PC-3 (cell line): ENCODE measurements at regions of chr5 and their contacts with region 1.

Region 1: DNA sequence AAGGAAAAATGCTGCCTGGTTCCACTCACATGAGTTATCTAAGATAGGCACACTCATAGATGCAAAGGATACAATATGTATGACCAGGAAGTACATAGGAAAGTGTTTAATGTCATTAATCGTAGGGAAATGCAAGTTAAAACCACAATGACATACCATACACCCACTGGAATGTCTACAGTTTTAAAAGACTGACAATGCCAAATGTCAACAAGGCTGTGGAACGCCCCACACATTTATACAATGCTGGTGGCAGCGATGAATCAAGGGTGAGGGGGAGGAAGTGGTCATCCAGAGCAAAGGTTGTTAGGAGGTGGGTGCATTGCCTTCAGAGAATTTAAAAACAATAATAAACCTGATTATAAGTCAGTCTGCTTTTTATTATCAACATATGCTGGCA is 437.8 kb downstream of the ARHGEF28 start:
- DNase-seq: peak; percentile 90
- ATAC-seq: peak; percentile 95
- H3K4me3 ChIP-seq: no peak overlapping the region
- H3K27ac ChIP-seq: peak overlapping the region; percentile 55
- H3K4me1 ChIP-seq: peaks cover 45% of the 10 kb centered on the region
- H3K27me3 ChIP-seq: no peaks in the 10 kb centered on the region
- CTCF ChIP-seq: no peak

Region 2: DNA sequence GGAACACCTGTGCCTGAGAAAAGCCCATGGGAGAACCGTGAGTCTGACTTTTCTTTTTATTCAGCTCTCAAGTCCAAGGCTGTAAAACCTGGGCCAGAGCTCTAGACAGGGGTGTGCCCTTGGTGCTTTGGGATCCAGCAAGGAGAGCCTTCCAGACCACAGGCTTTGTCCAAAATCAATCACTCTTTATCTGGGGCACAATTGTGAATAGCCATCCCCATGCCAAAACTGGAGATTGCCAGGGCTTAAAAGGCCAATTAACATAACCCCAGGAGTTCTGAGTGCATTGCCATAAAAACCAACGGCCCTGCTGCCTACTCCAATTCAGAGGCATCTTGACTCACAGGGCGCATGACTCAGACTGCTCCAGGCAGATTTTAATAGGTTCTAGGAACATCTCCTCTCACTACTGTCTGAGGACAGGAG is 46.0 kb before region 1 on chr5:
- CTCF ChIA-PET with region 1: no interaction called
- POLR2A ChIA-PET with region 1: no interaction called
- intact Hi-C with region 1: loop called (anchors 5 kb)
- DNase-seq: peak; percentile 82
- ATAC-seq: peak; percentile 94
- H3K4me3 ChIP-seq: no peak overlapping the region
- H3K27ac ChIP-seq: peak overlapping the region; percentile 96
- H3K4me1 ChIP-seq: peaks cover 26% of the 10 kb centered on the region
- H3K27me3 ChIP-seq: no peaks in the 10 kb centered on the region
- CTCF ChIP-seq: no peak

Region 3: DNA sequence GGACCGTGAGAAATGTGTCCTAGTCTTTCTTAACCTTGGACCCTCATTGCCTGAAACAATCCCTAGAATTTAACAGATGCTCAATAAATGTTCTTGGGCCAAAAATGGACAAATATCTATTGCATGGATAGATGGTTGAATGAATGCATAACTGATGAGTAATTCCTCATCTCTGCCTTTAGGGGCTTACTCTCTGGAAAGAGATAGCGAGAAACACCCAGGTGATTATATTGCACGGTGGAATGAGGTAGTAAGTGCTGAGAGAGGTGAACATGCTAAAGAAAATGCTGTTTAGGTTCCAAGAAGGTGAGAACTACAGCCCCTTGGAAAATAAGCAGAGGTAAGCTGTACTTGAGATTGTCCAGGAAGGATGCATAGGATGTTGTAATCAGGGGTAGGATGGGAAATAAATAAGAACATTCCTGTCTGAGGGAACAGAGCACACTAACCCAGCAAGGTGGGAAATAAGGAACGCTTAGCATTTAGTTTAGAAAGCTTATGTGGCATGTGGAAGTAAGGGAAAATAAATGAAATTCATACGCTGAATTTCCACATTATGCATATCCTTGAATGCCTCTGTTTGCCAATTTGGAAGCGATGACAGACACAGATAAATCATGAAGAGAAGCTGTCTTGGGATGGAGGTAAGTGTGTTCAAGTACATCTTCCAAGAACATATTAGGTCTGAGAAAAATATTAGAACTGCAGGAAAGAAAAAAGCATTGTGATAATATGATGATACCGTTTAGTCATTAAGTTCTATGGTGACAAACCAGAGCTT is 11.2 kb before region 1 on chr5:
- CTCF ChIA-PET with region 1: no interaction called
- POLR2A ChIA-PET with region 1: no interaction called
- intact Hi-C with region 1: no loop called
- DNase-seq: peak; percentile 20
- ATAC-seq: no peak
- H3K4me3 ChIP-seq: no peak overlapping the region
- H3K27ac ChIP-seq: no peak overlapping the region
- H3K4me1 ChIP-seq: no peaks in the 10 kb centered on the region; the same call in 1 of the 2 replicates
- H3K27me3 ChIP-seq: no peaks in the 10 kb centered on the region
- CTCF ChIP-seq: no peak

Region 4: GRCh38 chr5:74095871-74096270 is 32.0 kb after region 1 on chr5:
- CTCF ChIA-PET with region 1: no interaction called
- POLR2A ChIA-PET with region 1: no interaction called
- intact Hi-C with region 1: loop called (anchors 5 kb)
- DNase-seq: peak; percentile 80
- ATAC-seq: peak; percentile 97
- H3K4me3 ChIP-seq: no peak overlapping the region
- H3K27ac ChIP-seq: peak overlapping the region; percentile 80
- H3K4me1 ChIP-seq: peaks cover 30% of the 10 kb centered on the region
- H3K27me3 ChIP-seq: no peaks in the 10 kb centered on the region
- CTCF ChIP-seq: no peak

Region 5: GRCh38 chr5:74127381-74128320 is 63.8 kb after region 1 on chr5:
- CTCF ChIA-PET with region 1: no interaction called
- POLR2A ChIA-PET with region 1: no interaction called
- intact Hi-C with region 1: loop called (anchors 5 kb)
- DNase-seq: peak; percentile 55
- ATAC-seq: peak; percentile 72
- H3K4me3 ChIP-seq: peak overlapping the region; percentile 63
- H3K27ac ChIP-seq: no peak overlapping the region
- H3K4me1 ChIP-seq: peaks cover 21% of the 10 kb centered on the region
- H3K27me3 ChIP-seq: no peaks in the 10 kb centered on the region
- CTCF ChIP-seq: peak; percentile 51

Region 6: DNA sequence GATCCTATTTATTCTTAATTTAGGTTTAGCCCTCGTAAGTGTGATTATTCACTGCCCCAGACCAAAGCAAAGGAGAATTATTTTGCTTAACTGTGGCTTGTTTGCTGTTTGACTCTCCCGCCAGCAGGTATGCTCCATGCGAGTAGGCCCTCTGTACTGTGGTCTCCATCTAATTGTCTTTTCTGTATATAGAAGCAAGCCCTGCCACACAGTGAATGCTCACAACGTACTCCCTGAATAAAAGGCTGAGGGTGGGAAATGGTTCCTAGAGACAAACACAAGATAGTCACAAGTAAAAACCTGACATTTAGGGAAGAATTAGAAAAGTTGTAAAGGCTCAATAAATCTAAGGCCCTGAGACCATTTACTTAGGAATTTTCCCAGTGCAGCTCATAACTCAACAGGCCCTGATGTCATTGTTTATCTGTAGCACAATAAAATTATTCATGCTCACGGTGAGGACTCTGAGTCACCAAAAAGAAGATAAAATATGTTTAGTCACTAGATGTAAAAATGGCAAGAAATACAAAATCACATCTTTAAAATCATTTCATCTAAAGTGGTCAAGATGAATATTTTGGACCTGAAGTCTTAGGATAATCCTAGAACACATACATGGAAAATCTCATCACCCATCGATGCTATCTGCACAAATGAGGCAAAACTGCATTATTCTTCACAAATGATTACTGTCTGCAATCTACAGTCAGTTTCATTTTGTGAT is 103.5 kb after region 1 on chr5:
- CTCF ChIA-PET with region 1: no interaction called
- POLR2A ChIA-PET with region 1: no interaction called
- intact Hi-C with region 1: loop called (anchors 5 kb)
- DNase-seq: peak; percentile 80
- ATAC-seq: peak; percentile 95
- H3K4me3 ChIP-seq: peak overlapping the region; percentile 45
- H3K27ac ChIP-seq: peak overlapping the region; percentile 94
- H3K4me1 ChIP-seq: peaks cover 26% of the 10 kb centered on the region
- H3K27me3 ChIP-seq: no peaks in the 10 kb centered on the region
- CTCF ChIP-seq: no peak

Region 7: GRCh38 chr5:74326571-74327338 is 262.9 kb after region 1 on chr5:
- CTCF ChIA-PET with region 1: no interaction called
- POLR2A ChIA-PET with region 1: no interaction called
- intact Hi-C with region 1: loop called (anchors 5 kb)
- DNase-seq: peak; percentile 92
- ATAC-seq: peak; percentile 74
- H3K4me3 ChIP-seq: no peak overlapping the region; the same call in 1 of the 2 replicates
- H3K27ac ChIP-seq: peak overlapping the region; percentile 70
- H3K4me1 ChIP-seq: peaks cover 27% of the 10 kb centered on the region
- H3K27me3 ChIP-seq: no peaks in the 10 kb centered on the region
- CTCF ChIP-seq: no peak